Motor neuron (in vitro differentiated cells): ENCODE measurements at regions of chr1 and their contacts with region 1.

Region 1: DNA sequence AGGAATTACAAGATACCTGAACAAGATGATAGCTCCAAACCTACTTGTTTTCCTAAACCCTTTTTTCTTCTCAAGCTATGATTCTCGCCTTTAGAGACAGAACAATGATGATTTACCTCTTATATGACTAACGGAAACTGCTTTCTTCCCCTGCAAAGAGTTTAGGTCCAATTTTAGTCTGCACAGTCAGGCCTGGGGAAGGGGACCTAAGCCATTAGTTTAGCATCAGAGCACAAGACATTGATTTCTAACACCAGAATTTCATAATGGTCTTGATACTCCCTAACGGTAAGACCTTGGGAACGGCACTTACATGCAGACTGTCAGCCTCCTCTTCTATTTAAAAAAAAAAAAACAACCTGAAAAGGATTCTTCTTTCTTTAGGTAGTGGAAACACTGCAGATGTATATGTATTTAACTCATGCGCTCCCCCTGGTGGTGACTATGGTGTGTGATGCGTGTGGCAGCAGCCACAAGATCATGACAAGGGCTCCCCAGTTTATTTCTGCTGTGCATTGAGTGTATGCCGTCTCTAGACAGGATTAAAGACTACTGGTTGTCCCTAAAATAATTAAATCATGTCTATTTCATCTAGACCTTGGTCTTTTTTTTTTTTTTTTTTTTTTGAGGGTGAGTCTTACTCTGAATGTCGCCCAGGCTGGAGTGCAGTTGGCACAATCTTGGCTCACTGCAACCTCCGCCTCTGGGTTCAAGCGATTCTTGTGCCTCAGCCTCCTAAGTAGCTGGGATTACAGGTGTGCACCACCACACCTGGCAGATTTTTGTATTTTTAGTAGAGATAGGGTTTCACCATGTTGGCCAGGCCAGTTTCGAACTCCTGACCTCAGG is 37.3 kb upstream of the TMEM222 start:
- ATAC-seq: peak; percentile 80 to 95 (median 89)
- H3K4me3 ChIP-seq: no peak overlapping the region
- H3K27ac ChIP-seq: no peak overlapping the region
- H3K4me1 ChIP-seq: no peaks in the 10 kb centered on the region

Region 2: DNA sequence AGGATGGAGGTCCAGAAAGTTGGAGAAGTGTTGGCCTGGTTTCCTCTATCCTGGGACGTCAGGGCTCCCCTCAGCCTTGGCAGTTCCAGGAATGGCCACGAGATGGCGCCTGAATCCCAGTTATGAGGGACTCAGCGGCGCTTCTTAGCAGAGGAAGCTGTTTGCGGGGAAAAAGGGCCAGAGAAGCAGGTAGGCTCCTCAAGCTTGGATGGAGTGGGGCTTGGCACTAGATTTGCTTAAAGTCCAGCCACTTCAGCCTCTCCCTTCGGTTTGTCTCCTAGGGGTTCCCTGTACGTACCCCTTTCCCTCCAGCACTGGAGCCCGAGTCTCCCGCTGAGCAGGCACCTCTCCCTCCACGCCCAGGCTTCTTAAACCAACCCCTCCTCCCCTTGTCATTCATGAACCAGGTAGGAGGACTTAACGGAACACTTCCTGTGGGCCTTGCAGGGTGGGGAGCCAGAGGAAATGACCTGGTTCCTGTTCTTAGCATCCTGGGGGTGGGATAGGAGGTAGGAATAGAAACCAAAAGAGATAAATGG is 240.0 kb before region 1 on chr1:
- in situ Hi-C with region 1: loop called in 3 of 9 experiments (anchors 25 kb)
- ATAC-seq: peak; percentile 76 to 95 (median 88)
- H3K4me3 ChIP-seq: no peak overlapping the region
- H3K27ac ChIP-seq: no peak overlapping the region
- H3K4me1 ChIP-seq: peaks cover 4 to 17% of the 10 kb centered on the region in 2 donors

Region 3: GRCh38 chr1:27102707-27103491 is 181.8 kb before region 1 on chr1:
- in situ Hi-C with region 1: loop called in 7 of 9 experiments (anchors 10 to 25 kb)
- ATAC-seq: peak; percentile 3 to 61 (median 32)
- H3K4me3 ChIP-seq: no peak overlapping the region
- H3K27ac ChIP-seq: no peak overlapping the region
- H3K4me1 ChIP-seq: peaks cover 27 to 30% of the 10 kb centered on the region in 2 donors

Region 4: DNA sequence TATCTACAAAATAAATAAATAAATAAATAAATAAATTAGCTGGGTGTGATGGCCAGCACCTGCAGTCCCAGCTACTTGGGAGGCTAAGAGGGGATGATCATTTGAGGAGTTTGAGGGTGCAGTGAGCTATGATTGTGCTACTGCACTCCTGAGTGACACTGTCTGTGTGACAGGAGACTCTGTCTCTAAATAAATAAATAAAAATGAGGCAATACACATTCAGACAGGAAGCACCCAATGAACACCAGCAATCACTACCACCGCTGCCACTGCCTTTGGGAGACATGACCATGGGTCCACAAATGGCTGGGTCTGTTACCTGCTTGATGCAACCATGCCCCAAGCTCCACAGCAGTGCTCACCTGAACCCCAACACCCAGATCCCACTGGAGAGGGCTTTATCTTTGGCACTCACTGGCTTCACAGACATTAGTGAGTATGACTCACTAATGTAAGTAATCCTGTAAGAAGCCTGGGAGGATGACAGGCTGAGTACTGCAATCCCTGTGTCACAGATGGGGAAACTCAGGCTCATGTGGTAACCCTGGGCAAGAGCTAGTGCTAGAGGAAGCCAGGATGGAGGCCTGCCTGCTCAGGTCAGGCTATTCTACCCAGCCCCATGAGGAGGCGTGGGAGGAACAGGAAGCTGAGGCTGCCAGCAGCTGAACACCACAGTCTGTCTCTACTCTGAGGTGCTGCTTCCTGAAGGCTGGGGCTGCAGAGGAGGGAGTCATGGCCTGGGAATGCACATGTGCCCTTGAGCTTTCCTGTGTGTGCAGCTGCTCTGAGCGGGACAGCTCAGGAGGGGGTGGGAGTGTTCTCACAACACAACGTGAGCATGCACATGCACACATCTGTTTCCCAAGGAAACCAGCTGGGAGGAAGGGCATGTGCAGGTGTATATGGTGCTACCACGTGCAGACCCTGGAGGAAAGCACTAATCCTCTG is 172.7 kb before region 1 on chr1:
- in situ Hi-C with region 1: loop called in 7 of 9 experiments (anchors 10 to 25 kb)
- ATAC-seq: peak; percentile 87 to 97 (median 94)
- H3K4me3 ChIP-seq: no peak overlapping the region
- H3K27ac ChIP-seq: no peak overlapping the region
- H3K4me1 ChIP-seq: no peaks in the 10 kb centered on the region